Activated naive CD4-positive, alpha-beta T cell treated with anti-CD3 and anti-CD28 coated beads for 36 hours (primary cell): ENCODE measurements at regions of chr1 and their contacts with region 1.

Region 1: GRCh38 chr1:25219656-25220251 is 12.5 kb downstream of the SYF2 start:
- DNase-seq: no peak
- H3K4me3 Mint-ChIP-seq: no peak overlapping the region
- H3K27ac Mint-ChIP-seq: no peak overlapping the region
- H3K4me1 Mint-ChIP-seq: peaks cover 10% of the 10 kb centered on the region
- H3K27me3 Mint-ChIP-seq: no peaks in the 10 kb centered on the region

Region 2: GRCh38 chr1:24727501-24728216 is 492.1 kb before region 1 on chr1:
- CTCF ChIA-PET with region 1: interaction called, 10 read pairs
- intact Hi-C with region 1: no loop called
- DNase-seq: peak; percentile 41
- H3K4me3 Mint-ChIP-seq: no peak overlapping the region
- H3K27ac Mint-ChIP-seq: no peak overlapping the region
- H3K4me1 Mint-ChIP-seq: peaks cover 8% of the 10 kb centered on the region
- H3K27me3 Mint-ChIP-seq: no peaks in the 10 kb centered on the region

Region 3: GRCh38 chr1:24964811-24965570 is 254.8 kb before region 1 on chr1:
- CTCF ChIA-PET with region 1: no interaction called
- intact Hi-C with region 1: no loop called
- DNase-seq: peak; percentile 97
- H3K4me3 Mint-ChIP-seq: peak overlapping the region; percentile 92
- H3K27ac Mint-ChIP-seq: peak overlapping the region; percentile 98
- H3K4me1 Mint-ChIP-seq: peaks cover 82% of the 10 kb centered on the region
- H3K27me3 Mint-ChIP-seq: no peaks in the 10 kb centered on the region